Prostate gland (tissue), 2 donors: ENCODE measurements at regions of chr14 and their contacts with region 1.

Region 1: GRCh38 chr14:22872033-22872832 is 693 bp downstream of the LRP10 start:
- DNase-seq: peak; percentile 89
- H3K4me3 ChIP-seq: peak overlapping the region; percentile 94 to 100
- H3K27ac ChIP-seq: peak overlapping the region; percentile 100
- H3K4me1 ChIP-seq: peaks cover 4% of the 10 kb centered on the region
- H3K27me3 ChIP-seq: no peaks in the 10 kb centered on the region
- CTCF ChIP-seq: peak; percentile 93 to 98 (median 97)
- POLR2A ChIP-seq: peak; percentile 56

Region 2: GRCh38 chr14:22766456-22767322 is 105.5 kb before region 1 on chr14 and contains the start of gene OXA1L:
- intact Hi-C with region 1: no loop called
- DNase-seq: peak; percentile 97
- H3K4me3 ChIP-seq: peak within 1 kb of the TSS; percentile 67 to 91
- H3K27ac ChIP-seq: peak within 1 kb of the TSS; percentile 73 to 83
- H3K4me1 ChIP-seq: no peaks in the 10 kb centered on the region
- H3K27me3 ChIP-seq: no peaks in the 10 kb centered on the region
- CTCF ChIP-seq: no peak
- POLR2A ChIP-seq: no peak
- total RNA-seq, gene OXA1L: 65.2 to 81.9 TPM

Region 3: DNA sequence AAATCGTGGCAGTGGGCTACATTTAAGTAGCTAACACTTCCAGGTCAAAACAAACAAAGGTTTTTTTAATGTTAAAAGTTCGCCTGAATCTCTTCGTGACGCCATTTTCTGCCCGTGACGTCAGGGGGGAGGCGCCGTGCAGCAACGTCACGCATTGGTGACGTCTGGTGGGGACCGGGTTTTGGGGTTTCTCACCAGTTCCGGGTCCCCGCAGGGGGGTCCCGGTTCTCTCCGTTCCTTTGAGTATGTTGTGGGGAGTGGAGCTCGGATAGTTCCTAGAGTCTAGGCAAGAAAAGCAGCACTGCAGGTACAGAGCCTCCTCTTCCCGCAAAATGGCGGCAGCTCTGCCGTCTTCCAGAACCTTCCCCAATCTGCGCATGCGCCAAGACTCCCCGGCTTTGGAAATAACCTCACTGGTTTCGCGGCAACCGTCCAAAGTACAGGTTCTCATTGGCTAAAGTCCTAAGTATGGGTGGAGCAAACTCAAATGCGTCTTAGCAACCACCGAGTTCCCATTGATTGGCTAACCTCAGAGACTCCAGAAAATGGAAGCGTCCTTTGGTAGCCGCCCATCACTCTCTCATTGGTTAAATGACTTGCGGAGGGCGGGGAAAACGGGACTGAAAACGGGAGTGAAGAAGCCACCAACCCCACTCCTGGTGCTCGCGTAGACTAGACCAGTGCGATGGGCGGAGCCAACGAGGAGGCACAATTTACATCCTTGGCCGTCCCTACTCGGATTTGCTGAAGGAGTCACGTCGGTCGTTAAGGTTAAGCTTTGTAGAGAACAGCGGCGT is 46.8 kb after region 1 on chr14 and contains the start of gene RBM23:
- intact Hi-C with region 1: loop called (anchors 5 kb)
- DNase-seq: peak; percentile 100
- H3K4me3 ChIP-seq: peak within 1 kb of the TSS; percentile 61 to 73
- H3K27ac ChIP-seq: peak within 1 kb of the TSS; percentile 97 to 99
- H3K4me1 ChIP-seq: no peaks in the 10 kb centered on the region
- H3K27me3 ChIP-seq: no peaks in the 10 kb centered on the region
- CTCF ChIP-seq: peak in 1 of 4 experiments; percentile 29
- POLR2A ChIP-seq: peak; percentile 83
- total RNA-seq, gene RBM23: 170 to 463 TPM

Region 4: GRCh38 chr14:23402296-23403138 is 530.3 kb after region 1 on chr14:
- intact Hi-C with region 1: no loop called
- DNase-seq: no peak
- H3K4me3 ChIP-seq: no peak overlapping the region
- H3K27ac ChIP-seq: no peak overlapping the region
- H3K4me1 ChIP-seq: no peaks in the 10 kb centered on the region
- H3K27me3 ChIP-seq: no peaks in the 10 kb centered on the region
- CTCF ChIP-seq: no peak
- POLR2A ChIP-seq: no peak

Region 5: GRCh38 chr14:23555882-23556699 is 683.9 kb after region 1 on chr14 and contains the start of gene THTPA:
- intact Hi-C with region 1: no loop called
- DNase-seq: peak; percentile 93
- H3K4me3 ChIP-seq: peak within 1 kb of the TSS; percentile 71 to 84
- H3K27ac ChIP-seq: peak within 1 kb of the TSS; percentile 89 to 90
- H3K4me1 ChIP-seq: peaks cover 6% of the 10 kb centered on the region
- H3K27me3 ChIP-seq: no peaks in the 10 kb centered on the region
- CTCF ChIP-seq: peak in 1 of 4 experiments; percentile 10
- POLR2A ChIP-seq: peak; percentile 41
- total RNA-seq, gene THTPA: 22.5 to 45.4 TPM